Left lung (tissue), 14 donors: ENCODE measurements at regions of chr3 and their contacts with region 1.

Region 1: GRCh38 chr3:8324740-8325139 is 176.9 kb upstream of the LMCD1 start:
- DNase-seq: peak in 1 of 4 donors; percentile 35
- ATAC-seq: peak; percentile 81
- H3K4me3 ChIP-seq: no peak overlapping the region
- H3K27ac ChIP-seq: no peak overlapping the region
- H3K4me1 ChIP-seq: no peaks in the 10 kb centered on the region
- H3K27me3 ChIP-seq: no peaks in the 10 kb centered on the region
- CTCF ChIP-seq: peak; percentile 25 to 30

Region 2: GRCh38 chr3:8416965-8417364 is 92.2 kb after region 1 on chr3:
- intact Hi-C with region 1: loop called in 1 of 2 experiments (anchors 5 kb)
- DNase-seq: no peak
- ATAC-seq: peak; percentile 87
- H3K4me3 ChIP-seq: no peak overlapping the region
- H3K27ac ChIP-seq: no peak overlapping the region
- H3K4me1 ChIP-seq: no peaks in the 10 kb centered on the region
- H3K27me3 ChIP-seq: no peaks in the 10 kb centered on the region
- CTCF ChIP-seq: no peak

Region 3: GRCh38 chr3:8524249-8524648 is 199.5 kb after region 1 on chr3:
- intact Hi-C with region 1: no loop called
- DNase-seq: no peak
- ATAC-seq: no peak
- H3K4me3 ChIP-seq: no peak overlapping the region
- H3K27ac ChIP-seq: peak overlapping the region; percentile 17 to 33
- H3K4me1 ChIP-seq: peaks cover 10 to 27% of the 10 kb centered on the region in 2 donors
- H3K27me3 ChIP-seq: no peaks in the 10 kb centered on the region
- CTCF ChIP-seq: no peak